ENCODE measurements at regions of chr20 and their contacts with region 1.

Region 1: GRCh38 chr20:22691369-22692118 is 107.2 kb upstream of the FOXA2 start:
- DNase-seq: peak; percentile 84
- H3K4me3 ChIP-seq: peak overlapping the region in 1 of 4 donors; percentile 23
- H3K27ac ChIP-seq: no peak overlapping the region
- H3K4me1 ChIP-seq: peaks cover 0 to 5% (median 4%) of the 10 kb centered on the region in 4 donors
- H3K27me3 ChIP-seq: no peaks in the 10 kb centered on the region
- CTCF ChIP-seq: peak; percentile 66 to 90 (median 85)
- EP300 ChIP-seq: no peak
- POLR2A ChIP-seq: no peak

Region 2: DNA sequence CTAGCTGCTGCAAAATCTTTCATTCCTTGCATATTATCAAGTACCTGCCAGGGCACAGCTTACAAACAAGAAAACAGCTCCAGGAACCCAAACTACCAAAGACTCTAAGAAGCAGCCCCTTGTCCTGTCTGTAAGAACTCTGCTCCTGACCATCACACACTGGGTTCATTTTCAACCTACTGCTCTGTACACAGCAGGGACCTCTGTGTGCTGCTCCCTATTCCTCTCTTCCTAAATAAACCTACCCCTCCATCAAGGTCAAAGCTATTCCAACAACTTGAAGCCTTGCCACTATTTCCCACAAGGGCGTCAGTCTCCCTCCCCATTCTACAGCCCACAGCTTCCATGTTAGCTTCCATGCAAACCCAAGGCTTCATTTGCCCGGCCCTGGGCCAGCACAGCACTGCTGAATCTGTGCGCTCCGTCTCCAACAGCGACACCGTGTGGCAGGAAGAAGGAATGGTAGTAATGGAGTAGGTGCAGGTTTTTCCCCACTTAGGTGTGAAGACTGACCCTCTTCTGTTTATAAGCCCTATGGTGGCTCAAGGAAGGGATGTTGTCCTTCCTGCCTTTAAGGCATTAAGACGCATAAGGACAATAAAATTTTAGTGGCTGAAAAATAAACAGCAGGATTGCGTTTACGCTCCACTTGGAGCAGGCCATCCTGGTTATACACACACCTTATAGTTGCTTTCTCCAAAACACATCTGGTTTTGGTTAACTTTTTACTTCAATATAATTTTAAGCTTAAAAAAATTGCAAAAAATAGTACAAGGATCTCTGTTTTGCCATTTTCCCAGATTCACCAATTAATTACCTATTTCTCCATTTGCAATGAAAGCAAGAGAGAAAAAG is 543.9 kb after region 1 on chr20:
- intact Hi-C with region 1: loop called (anchors 10 kb)
- DNase-seq: no peak
- H3K4me3 ChIP-seq: no peak overlapping the region
- H3K27ac ChIP-seq: no peak overlapping the region
- H3K4me1 ChIP-seq: no peaks in the 10 kb centered on the region
- H3K27me3 ChIP-seq: no peaks in the 10 kb centered on the region
- CTCF ChIP-seq: peak; percentile 33 to 59 (median 48)
- EP300 ChIP-seq: no peak
- POLR2A ChIP-seq: no peak

Region 3: GRCh38 chr20:23339986-23340385 is 648.4 kb after region 1 on chr20:
- intact Hi-C with region 1: loop called (anchors 2 kb)
- DNase-seq: peak; percentile 60
- H3K4me3 ChIP-seq: no peak overlapping the region
- H3K27ac ChIP-seq: no peak overlapping the region
- H3K4me1 ChIP-seq: no peaks in the 10 kb centered on the region
- H3K27me3 ChIP-seq: peaks cover 0 to 6% (median 0%) of the 10 kb centered on the region in 3 donors
- CTCF ChIP-seq: no peak
- EP300 ChIP-seq: no peak
- POLR2A ChIP-seq: no peak

Measured in sigmoid colon (tissue), 7 donors.